Activated naive CD4-positive, alpha-beta T cell treated with anti-CD3 and anti-CD28 coated beads for 36 hours (primary cell): ENCODE measurements at regions of chr1 and their contacts with region 1.

Region 1: GRCh38 chr1:149927503-149928387 is at the start of gene SF3B4:
- DNase-seq: peak; percentile 97
- H3K4me3 Mint-ChIP-seq: peak within 1 kb of the TSS; percentile 99
- H3K27ac Mint-ChIP-seq: peak within 1 kb of the TSS; percentile 95
- H3K4me1 Mint-ChIP-seq: peaks cover 45% of the 10 kb centered on the region
- H3K27me3 Mint-ChIP-seq: no peaks in the 10 kb centered on the region
- total RNA-seq, gene SF3B4: 47.3 to 48.5 TPM

Region 2: GRCh38 chr1:149899460-149900293 is 28.1 kb before region 1 on chr1 and contains the start of gene BOLA1:
- CTCF ChIA-PET with region 1: no interaction called
- intact Hi-C with region 1: loop called (anchors 1 kb)
- DNase-seq: peak; percentile 90
- H3K4me3 Mint-ChIP-seq: peak within 1 kb of the TSS; percentile 97
- H3K27ac Mint-ChIP-seq: peak within 1 kb of the TSS; percentile 94
- H3K4me1 Mint-ChIP-seq: peaks cover 20% of the 10 kb centered on the region
- H3K27me3 Mint-ChIP-seq: no peaks in the 10 kb centered on the region
- total RNA-seq, gene BOLA1: 24.7 to 28.7 TPM

Region 3: DNA sequence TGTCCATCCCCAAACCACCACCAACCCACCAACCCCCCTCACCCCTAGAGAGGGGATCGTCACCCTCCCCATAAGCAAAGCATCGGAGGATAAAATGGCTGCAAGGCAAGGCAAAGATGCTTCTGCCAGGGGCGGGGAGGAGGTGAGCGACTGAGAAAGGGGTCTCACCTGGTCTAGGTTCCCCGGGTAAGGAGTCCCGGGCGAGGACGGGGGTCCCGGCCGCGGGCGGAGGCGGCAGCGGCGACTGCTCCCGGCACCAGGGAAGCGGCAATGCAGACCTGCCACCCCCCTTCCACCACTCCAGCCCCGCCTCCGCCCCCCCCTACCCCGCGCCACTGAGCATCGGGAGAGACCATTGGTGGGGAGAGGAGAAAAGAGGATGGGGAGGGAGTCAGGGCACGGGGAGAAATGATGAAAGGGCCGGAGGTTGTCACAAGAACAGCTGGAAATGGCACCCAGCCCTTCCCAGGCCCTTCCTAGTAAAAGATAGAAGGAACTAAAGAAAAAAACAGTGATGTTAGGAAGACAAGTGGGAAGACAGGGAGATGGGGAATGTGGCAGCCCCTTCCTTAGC is 10.1 kb before region 1 on chr1 and contains the start of gene SV2A:
- CTCF ChIA-PET with region 1: no interaction called
- intact Hi-C with region 1: loop called (anchors 1 kb)
- DNase-seq: peak; percentile 72
- H3K4me3 Mint-ChIP-seq: peak within 1 kb of the TSS; percentile 86
- H3K27ac Mint-ChIP-seq: no peak within 1 kb of the TSS
- H3K4me1 Mint-ChIP-seq: peaks cover 34% of the 10 kb centered on the region
- H3K27me3 Mint-ChIP-seq: no peaks in the 10 kb centered on the region
- total RNA-seq, gene SV2A: 8.2 to 8.6 TPM

Region 4: DNA sequence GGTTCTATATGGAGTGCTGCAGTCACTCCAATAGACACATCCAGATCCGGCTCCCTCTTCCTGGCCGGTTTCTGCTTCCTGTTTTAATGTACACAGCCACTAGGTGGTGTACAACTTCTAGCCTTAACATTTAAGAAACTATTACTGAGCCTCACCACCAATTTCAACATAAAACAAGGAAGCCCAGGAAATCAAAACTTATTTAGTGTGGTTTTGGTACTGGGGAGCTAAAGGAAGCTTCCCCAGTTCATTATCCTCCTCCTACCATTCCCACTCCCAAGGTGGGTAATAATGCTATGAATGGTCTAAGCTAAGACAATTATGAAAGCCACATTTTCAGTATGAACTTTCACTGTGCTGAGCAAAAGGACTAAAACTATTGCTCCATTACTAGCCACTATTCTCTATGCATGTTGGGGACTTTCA is 34.4 kb after region 1 on chr1:
- CTCF ChIA-PET with region 1: no interaction called
- intact Hi-C with region 1: no loop called
- DNase-seq: peak; percentile 63
- H3K4me3 Mint-ChIP-seq: no peak overlapping the region
- H3K27ac Mint-ChIP-seq: no peak overlapping the region
- H3K4me1 Mint-ChIP-seq: peaks cover 12% of the 10 kb centered on the region
- H3K27me3 Mint-ChIP-seq: no peaks in the 10 kb centered on the region

Region 5: DNA sequence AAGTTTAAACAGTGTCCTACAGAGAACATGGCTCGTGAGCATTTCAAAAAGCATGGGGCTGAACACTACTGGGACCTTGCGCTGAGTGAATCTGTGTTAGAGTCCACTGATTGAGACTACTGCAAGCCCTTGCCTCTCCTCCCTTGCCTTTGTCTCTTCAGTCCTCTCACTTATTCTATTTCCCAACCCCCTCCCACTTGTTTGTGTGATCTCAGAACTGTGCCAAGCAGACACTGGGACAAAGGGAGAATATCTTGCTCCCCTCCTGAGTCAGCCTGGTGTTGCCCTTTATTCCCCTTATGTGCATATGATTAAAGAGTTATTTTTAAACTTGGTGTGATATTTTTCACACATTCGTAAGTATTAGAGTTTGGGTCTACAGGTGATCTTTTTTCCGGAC is 425.1 kb after region 1 on chr1:
- CTCF ChIA-PET with region 1: no interaction called
- intact Hi-C with region 1: no loop called
- DNase-seq: no peak
- H3K4me3 Mint-ChIP-seq: no peak overlapping the region
- H3K27ac Mint-ChIP-seq: no peak overlapping the region
- H3K4me1 Mint-ChIP-seq: no peaks in the 10 kb centered on the region
- H3K27me3 Mint-ChIP-seq: no peaks in the 10 kb centered on the region

Region 6: DNA sequence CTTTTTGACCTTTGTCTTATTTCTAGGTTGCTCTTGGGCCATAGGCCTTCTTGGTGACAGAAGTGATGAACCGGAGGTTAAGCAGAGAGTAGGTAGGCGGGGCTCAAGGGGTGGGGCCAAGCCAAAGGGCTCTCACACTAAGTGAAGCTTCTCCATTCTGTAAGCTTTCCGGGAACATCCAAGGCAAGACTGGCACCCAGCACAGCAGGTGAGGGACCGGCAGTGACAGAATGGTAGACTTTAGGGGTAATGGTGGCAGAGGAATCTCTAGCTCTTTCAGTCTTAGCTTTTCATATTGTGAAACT is 1228.7 kb after region 1 on chr1 and contains the start of gene TNFAIP8L2:
- CTCF ChIA-PET with region 1: no interaction called
- intact Hi-C with region 1: no loop called
- DNase-seq: peak; percentile 93
- H3K4me3 Mint-ChIP-seq: peak within 1 kb of the TSS; percentile 97
- H3K27ac Mint-ChIP-seq: peak within 1 kb of the TSS; percentile 98
- H3K4me1 Mint-ChIP-seq: peaks cover 40% of the 10 kb centered on the region
- H3K27me3 Mint-ChIP-seq: no peaks in the 10 kb centered on the region
- total RNA-seq, gene TNFAIP8L2: 9.6 to 10.5 TPM